SK-N-SH (cell line): ENCODE measurements at regions of chr15 and their contacts with region 1.

Region 1: GRCh38 chr15:51192521-51193280 is 98.0 kb upstream of the TNFAIP8L3 start:
- DNase-seq: peak; percentile 76
- H3K4me3 ChIP-seq: no peak overlapping the region
- H3K27ac ChIP-seq: no peak overlapping the region
- H3K4me1 ChIP-seq: peaks cover 0 to 2% of the 10 kb centered on the region in 2 experiments; a peak in 1 of 4 replicates
- H3K27me3 ChIP-seq: peaks cover 21% of the 10 kb centered on the region; the same call in 1 of the 2 replicates
- CTCF ChIP-seq: peak; percentile 93
- EP300 ChIP-seq: no peak
- RAD21 ChIP-seq: peak; percentile 82

Region 2: GRCh38 chr15:51004103-51004551 is 188.6 kb before region 1 on chr15:
- CTCF ChIA-PET with region 1: no interaction called
- POLR2A ChIA-PET with region 1: no interaction called
- DNase-seq: no peak
- H3K4me3 ChIP-seq: no peak overlapping the region
- H3K27ac ChIP-seq: no peak overlapping the region
- H3K4me1 ChIP-seq: no peaks in the 10 kb centered on the region
- H3K27me3 ChIP-seq: no peaks in the 10 kb centered on the region
- CTCF ChIP-seq: no peak
- EP300 ChIP-seq: no peak
- RAD21 ChIP-seq: no peak

Region 3: DNA sequence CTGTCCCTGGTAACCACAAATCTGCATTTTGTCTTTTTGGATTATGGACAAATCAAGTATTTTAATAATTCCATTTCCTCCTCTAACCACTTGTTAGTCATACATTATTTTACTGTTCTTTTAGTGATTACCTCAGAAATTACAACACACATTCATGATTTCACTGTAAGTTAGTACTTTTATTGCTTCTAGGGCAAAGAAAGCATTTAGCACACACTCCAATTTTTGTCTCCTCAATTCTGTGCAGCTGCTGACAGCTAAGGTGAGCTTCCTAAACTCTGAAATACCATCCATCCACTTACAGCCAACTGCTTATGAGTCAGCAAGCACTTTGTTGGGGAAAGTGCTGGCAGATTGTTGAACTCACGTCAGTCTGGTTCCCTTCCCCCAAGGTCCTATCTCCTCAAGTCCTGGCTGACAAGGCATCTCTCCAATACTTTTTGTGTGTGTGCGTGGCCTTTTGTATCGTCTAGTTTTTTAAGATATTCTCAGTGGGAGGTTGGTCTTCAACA is 48.6 kb before region 1 on chr15:
- CTCF ChIA-PET with region 1: interaction called, 19 read pairs
- POLR2A ChIA-PET with region 1: no interaction called
- DNase-seq: no peak
- H3K4me3 ChIP-seq: no peak overlapping the region
- H3K27ac ChIP-seq: no peak overlapping the region
- H3K4me1 ChIP-seq: 0 out of 4 replicates have a peak, but pooled peaks cover 0 to 4% of the 10 kb centered on the region in 2 experiments
- H3K27me3 ChIP-seq: no peaks in the 10 kb centered on the region; the same call in 1 of the 2 replicates
- CTCF ChIP-seq: no peak
- EP300 ChIP-seq: no peak
- RAD21 ChIP-seq: no peak

Region 4: GRCh38 chr15:51203797-51204196 is 11.1 kb after region 1 on chr15:
- CTCF ChIA-PET with region 1: interaction called, 35 read pairs
- POLR2A ChIA-PET with region 1: no interaction called
- DNase-seq: no peak
- H3K4me3 ChIP-seq: no peak overlapping the region
- H3K27ac ChIP-seq: no peak overlapping the region
- H3K4me1 ChIP-seq: no peaks in the 10 kb centered on the region; a peak in 1 of 4 replicates
- H3K27me3 ChIP-seq: no peaks in the 10 kb centered on the region; the same call in 1 of the 2 replicates
- CTCF ChIP-seq: no peak
- EP300 ChIP-seq: no peak
- RAD21 ChIP-seq: no peak

Region 5: DNA sequence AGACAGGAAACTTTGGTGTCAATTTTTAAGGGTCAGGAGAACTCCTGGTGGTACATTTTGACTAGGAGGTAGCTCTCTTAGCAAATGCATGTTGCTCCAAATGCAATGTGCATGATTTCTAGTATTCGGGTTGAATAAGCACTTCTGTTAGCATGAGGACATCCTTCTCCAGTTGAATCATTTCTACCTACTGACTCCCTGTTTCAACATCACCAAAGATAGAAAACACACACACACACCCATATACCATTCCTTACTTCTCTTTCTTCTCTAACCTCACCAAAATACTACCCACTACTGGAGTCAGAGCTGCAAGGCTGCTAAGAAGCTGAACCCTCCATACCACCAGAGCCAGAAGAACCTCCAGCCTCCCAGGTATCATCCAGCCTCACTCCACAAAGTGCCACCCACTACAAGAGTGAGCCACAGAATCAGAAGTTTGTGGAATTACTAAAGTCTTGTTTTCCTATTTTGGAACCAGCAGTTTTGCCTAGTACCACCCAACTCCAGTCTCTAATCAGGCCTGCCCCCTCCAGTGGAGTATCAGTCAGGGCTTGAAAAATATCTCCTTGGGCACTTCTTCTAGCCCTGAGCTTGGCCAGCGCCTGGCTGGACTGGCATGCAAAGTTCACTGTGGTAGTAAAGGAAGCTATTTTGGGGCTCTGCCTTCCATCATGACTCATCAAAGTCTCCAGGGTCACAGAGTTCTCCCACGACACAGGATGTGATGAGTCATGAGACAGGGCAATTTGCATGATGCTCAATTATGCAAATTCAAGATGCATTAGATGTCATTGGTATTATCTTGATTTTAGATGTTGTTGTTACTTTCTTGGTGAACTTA is 35.5 kb after region 1 on chr15:
- CTCF ChIA-PET with region 1: interaction called, 12 read pairs
- POLR2A ChIA-PET with region 1: no interaction called
- DNase-seq: no peak
- H3K4me3 ChIP-seq: no peak overlapping the region
- H3K27ac ChIP-seq: peak overlapping the region in 1 of 2 experiments; percentile 56; a peak in 2 of 4 replicates
- H3K4me1 ChIP-seq: peaks cover 3 to 11% of the 10 kb centered on the region in 2 experiments; a peak in 2 of 4 replicates
- H3K27me3 ChIP-seq: no peaks in the 10 kb centered on the region
- CTCF ChIP-seq: no peak
- EP300 ChIP-seq: no peak
- RAD21 ChIP-seq: no peak

Region 6: DNA sequence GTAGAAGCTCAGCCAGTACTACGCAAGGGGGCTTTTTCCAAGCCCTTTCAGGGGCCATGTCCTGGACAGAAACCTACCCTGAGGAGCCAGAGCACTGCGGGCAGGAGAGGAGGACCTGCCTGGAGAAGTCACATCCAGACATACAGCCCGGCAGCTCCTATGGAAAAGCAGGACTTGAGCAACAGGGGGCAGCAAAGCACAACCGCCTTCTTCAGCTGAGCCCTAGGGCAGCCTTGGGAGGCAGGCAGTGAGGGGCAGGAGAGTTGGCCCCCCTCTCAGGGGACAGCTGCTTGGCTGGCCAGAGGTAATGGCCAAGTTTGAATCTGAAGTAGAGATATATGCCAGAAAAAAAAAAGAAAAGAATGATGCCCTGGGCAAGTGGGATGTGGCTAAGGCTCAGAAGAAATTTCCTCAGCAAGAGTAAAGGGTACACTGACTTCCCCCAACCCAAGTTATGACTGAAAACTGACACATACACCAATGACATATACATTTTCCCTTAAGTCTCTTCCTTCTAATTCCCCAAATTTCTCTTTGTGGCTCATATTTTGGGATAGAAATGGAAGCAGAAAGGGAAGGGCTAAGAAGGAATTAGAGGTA is 88.8 kb after region 1 on chr15:
- CTCF ChIA-PET with region 1: no interaction called
- POLR2A ChIA-PET with region 1: no interaction called
- DNase-seq: peak; percentile 60
- H3K4me3 ChIP-seq: no peak overlapping the region; a peak in 1 of 4 replicates
- H3K27ac ChIP-seq: no peak overlapping the region
- H3K4me1 ChIP-seq: peaks cover 0 to 8% of the 10 kb centered on the region in 2 experiments; a peak in 1 of 4 replicates
- H3K27me3 ChIP-seq: peaks cover 21% of the 10 kb centered on the region; the same call in 1 of the 2 replicates
- CTCF ChIP-seq: peak; percentile 52
- EP300 ChIP-seq: no peak
- RAD21 ChIP-seq: peak; percentile 70